ENCODE measurements at regions of chr1 and their contacts with region 1.

Region 1: DNA sequence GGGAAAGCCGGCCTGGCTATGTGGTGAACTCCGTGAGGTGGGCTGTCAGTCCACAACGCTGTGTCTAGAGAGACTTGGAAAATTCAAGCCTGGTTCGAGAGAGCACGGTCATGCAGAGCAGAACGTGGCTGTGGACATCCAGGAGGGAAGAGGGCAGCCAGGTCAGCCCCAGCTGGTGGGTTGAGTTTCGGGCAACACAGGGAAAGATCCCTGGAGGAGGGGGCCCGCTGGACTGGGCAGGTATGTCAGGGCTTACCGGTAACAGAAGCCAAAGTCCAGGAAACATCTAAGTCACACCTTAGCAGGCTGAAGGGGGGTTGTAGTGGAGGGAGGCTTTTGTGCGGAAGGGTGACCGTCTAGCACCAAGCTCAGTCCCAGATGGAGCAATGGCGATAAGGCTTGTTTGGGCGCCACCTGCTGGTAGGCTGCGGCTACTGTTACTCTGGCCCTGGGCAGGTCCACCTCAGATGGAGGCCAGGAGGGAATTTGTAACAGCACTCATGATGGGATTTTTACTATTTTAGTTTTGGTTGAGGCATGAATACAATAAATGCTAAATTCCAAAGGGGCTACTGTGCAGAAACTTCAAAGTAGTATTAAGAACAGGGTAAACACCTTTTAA is 143.3 kb upstream of the ZNF644 start:
- DNase-seq: peak; percentile 83
- H3K4me3 ChIP-seq: no peak overlapping the region
- H3K27ac ChIP-seq: no peak overlapping the region
- H3K4me1 ChIP-seq: peaks cover 4% of the 10 kb centered on the region
- H3K27me3 ChIP-seq: no peaks in the 10 kb centered on the region
- CTCF ChIP-seq: peak; percentile 98

Region 2: DNA sequence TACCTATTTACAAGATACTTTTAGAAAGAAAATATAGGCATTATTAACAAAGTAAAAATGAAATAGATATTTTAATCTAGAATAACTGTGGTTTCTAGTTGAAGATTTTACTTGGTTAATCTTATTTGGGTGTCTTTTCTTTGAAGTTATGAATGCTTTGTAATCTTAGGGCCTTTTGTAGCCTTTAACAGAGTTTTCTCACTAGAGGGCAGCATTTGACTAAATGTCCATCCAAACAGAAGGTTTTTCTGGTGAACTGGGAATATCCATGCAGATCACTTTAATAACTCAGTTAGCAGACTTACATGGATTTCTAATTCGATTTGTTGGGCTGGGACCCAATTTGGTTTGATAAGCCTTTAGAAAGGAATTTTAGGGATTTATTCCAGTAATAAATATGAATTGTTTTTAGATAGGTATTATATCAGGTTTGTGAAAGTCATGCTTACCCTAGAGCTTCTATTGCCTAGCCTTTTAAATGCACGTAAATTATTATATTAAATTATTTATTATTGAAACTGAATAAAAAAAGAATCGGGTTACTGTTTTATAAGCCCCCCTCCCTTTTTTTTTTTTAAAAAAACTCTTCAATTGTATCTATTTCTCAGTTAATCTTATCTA is 1050.5 kb before region 1 on chr1:
- CTCF ChIA-PET with region 1: interaction called, 3 read pairs
- POLR2A ChIA-PET with region 1: no interaction called
- intact Hi-C with region 1: loop called (anchors 2 kb)
- DNase-seq: peak; percentile 90
- H3K4me3 ChIP-seq: no peak overlapping the region
- H3K27ac ChIP-seq: no peak overlapping the region
- H3K4me1 ChIP-seq: peaks cover 26% of the 10 kb centered on the region
- H3K27me3 ChIP-seq: no peaks in the 10 kb centered on the region
- CTCF ChIP-seq: peak; percentile 86

Region 3: GRCh38 chr1:90616395-90616794 is 548.7 kb before region 1 on chr1:
- CTCF ChIA-PET with region 1: interaction called, 3 read pairs
- POLR2A ChIA-PET with region 1: no interaction called
- intact Hi-C with region 1: loop called (anchors 2 kb)
- DNase-seq: peak; percentile 73
- H3K4me3 ChIP-seq: no peak overlapping the region
- H3K27ac ChIP-seq: no peak overlapping the region
- H3K4me1 ChIP-seq: peaks cover 32% of the 10 kb centered on the region
- H3K27me3 ChIP-seq: no peaks in the 10 kb centered on the region
- CTCF ChIP-seq: peak; percentile 70

Region 4: GRCh38 chr1:90721210-90722194 is 443.6 kb before region 1 on chr1:
- CTCF ChIA-PET with region 1: interaction called, 16 read pairs
- POLR2A ChIA-PET with region 1: no interaction called
- intact Hi-C with region 1: loop called (anchors 2 kb)
- DNase-seq: peak; percentile 96
- H3K4me3 ChIP-seq: peak overlapping the region; percentile 75
- H3K27ac ChIP-seq: peak overlapping the region; percentile 88
- H3K4me1 ChIP-seq: peaks cover 24% of the 10 kb centered on the region
- H3K27me3 ChIP-seq: no peaks in the 10 kb centered on the region
- CTCF ChIP-seq: peak; percentile 96

Region 5: DNA sequence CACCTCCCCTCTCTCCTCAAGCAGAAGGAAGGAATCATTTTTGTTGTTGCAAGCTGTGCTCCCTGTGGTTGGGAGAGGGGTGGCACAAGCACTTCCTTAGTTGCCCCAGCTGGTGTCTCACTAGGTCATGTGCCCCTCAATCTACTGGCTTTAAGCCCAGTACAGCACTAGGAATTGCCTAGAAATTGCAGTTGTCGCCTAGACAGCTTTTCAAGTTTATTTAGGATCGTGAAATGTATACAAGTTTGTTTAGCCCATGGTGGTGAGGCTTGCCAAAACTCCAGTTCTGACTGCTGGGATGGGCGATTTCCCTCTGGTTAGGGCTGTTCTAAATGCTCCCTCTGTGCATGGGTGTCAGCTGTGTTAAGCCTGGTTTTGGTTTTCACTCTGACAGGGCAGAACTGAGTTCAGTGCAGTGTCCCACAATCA is 16.5 kb before region 1 on chr1:
- CTCF ChIA-PET with region 1: no interaction called
- POLR2A ChIA-PET with region 1: no interaction called
- intact Hi-C with region 1: no loop called
- DNase-seq: peak; percentile 30
- H3K4me3 ChIP-seq: no peak overlapping the region
- H3K27ac ChIP-seq: no peak overlapping the region
- H3K4me1 ChIP-seq: peaks cover 4% of the 10 kb centered on the region
- H3K27me3 ChIP-seq: no peaks in the 10 kb centered on the region
- CTCF ChIP-seq: 0 out of 2 replicates have a peak, but pooled peaks have one; percentile 10

Region 6: DNA sequence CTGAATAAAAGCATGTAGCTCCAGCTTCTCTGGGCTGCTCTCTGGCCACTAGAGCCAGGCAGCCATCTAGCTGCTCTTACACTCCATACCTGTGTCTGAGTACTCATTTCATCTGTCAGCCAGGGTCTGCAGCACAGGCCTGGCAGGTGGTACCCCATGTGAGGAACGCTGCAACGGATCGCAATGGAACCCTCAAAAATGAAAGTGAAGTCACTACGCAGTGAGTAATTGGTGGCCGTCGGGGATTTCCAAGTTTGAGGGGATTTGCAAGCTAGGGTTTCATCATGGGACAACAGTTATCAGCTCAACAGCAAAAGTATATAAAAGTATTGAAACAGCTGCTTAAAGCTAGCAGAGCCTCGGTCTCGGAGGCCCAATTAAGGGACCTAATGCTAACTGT is 52.8 kb after region 1 on chr1:
- CTCF ChIA-PET with region 1: no interaction called
- POLR2A ChIA-PET with region 1: no interaction called
- intact Hi-C with region 1: no loop called
- DNase-seq: no peak
- H3K4me3 ChIP-seq: no peak overlapping the region
- H3K27ac ChIP-seq: no peak overlapping the region
- H3K4me1 ChIP-seq: no peaks in the 10 kb centered on the region
- H3K27me3 ChIP-seq: no peaks in the 10 kb centered on the region
- CTCF ChIP-seq: no peak

Region 7: DNA sequence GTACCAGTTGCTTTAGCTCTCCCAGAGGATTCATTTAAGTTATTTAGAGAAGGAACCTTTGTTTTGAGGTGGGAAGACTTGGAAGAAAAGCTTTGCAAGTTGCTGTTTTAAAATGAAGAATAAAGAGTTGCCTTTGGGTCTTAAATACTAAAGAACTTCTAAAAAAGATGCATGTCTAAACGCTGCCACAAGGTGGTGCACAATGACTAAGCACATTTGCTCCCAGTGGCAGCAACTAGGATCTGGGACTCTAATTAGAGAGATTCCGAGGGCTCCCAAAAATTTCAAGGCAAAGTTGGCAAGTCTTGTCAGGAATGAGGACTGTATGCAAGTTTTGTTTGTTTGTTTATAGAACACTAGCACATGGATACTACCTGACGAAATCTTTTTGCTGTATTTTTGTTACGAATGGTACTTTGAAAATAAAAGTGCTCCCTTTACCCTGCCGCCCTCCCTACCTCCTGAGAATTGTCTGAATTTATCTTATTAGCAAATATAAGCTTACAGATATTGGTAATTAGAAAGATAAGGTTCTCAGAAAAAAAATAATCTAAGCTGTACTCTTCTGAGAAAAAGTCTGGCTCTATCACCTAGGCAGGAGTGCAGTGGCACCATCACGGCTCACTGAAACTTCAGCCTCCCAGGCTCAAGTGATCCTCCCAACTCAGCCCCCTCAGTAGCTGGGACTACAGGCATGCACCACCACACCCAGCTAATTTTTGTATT is 117.7 kb after region 1 on chr1:
- CTCF ChIA-PET with region 1: interaction called, 43 read pairs
- POLR2A ChIA-PET with region 1: no interaction called
- intact Hi-C with region 1: loop called (anchors 1 kb)
- DNase-seq: peak; percentile 83
- H3K4me3 ChIP-seq: no peak overlapping the region
- H3K27ac ChIP-seq: no peak overlapping the region
- H3K4me1 ChIP-seq: no peaks in the 10 kb centered on the region
- H3K27me3 ChIP-seq: no peaks in the 10 kb centered on the region
- CTCF ChIP-seq: peak; percentile 84

Region 8: DNA sequence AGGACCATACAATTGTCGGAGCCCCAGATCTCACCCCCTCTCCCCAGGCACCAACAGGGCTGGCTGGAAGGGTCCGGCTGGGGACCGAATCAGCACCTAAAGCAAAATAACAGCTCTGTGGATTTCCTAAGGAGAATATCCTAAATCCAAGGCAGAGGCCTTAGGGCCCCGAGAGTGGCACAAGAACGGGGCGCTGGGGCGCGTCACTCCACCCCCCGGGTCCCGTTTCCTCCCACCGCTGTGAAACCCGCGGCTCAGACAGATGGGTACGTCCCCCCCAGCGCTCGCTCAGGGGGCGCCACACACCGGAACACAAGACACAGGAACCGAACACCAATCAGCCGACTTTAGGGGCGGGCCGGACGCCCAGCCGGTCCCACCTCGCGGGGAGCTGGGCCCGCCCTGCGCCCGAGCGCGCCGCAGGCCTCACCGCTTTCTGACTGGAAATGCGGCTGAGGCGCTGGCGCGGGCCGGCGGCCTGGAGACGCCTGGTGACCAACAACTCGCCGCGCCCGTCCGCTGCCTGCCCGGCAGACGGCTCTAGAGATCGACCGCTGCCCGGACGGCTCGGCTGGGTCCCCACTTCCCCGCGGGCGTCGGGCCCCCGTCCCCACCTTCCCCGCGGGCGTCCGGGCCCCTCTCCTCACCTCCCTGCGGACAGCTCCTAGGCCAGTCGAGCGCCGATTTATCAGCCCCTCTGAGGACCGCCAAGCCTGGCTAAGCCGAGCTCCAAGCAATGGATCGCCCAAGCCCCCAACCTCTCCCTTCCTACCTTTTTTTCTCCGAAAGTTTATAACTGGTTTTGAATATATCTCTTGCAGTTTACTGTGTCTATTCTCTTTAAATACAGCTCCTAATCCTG is 239.2 kb after region 1 on chr1 and contains the start of gene HFM1:
- CTCF ChIA-PET with region 1: interaction called, 6 read pairs
- POLR2A ChIA-PET with region 1: no interaction called
- intact Hi-C with region 1: loop called (anchors 2 kb)
- DNase-seq: peak; percentile 88
- H3K4me3 ChIP-seq: peak within 1 kb of the TSS; percentile 60
- H3K27ac ChIP-seq: peak within 1 kb of the TSS; percentile 68
- H3K4me1 ChIP-seq: peaks cover 10% of the 10 kb centered on the region
- H3K27me3 ChIP-seq: no peaks in the 10 kb centered on the region
- CTCF ChIP-seq: no peak
- total RNA-seq, gene HFM1: 0.69 and 1.3 TPM in 2 replicates

Region 9: DNA sequence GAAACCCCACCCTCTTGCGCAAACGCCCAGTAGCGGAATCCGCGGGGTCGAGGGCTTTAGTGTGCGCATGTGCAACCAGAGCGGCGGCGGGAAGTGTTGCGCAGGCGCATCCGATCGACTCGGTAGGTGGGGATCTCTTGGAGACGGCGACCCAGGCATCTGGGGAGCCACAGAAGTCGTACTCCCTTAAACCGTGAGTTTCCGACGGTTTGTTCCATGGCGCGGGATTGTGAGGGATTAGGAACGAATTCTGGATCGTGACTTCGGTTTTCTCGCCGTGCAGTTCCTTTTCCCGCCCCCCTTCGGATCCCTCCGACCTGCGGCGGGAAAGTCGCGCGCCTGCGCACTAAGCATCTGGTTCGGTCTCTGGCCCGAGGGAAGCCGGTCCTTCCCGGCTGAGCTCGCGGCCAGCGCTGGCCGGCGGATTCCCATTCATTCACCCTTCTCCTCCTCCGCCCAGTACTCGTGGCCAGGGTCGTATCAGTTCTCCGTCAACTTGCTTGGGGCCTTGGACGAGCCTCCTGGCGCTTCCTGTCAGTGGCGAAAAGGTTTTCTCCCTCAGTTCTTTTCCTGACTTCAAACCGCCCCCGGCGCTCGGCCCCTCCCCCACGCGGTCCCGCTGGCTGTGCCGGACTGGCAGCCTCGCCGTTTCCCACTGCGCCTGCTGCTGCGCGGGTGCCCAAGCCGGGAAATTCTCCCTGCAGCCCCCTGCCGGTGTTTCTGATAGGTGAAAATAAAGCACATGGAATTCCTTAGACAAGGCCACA is 335.8 kb after region 1 on chr1 and contains the start of gene CDC7:
- CTCF ChIA-PET with region 1: interaction called, 3 read pairs
- POLR2A ChIA-PET with region 1: no interaction called
- intact Hi-C with region 1: loop called (anchors 5 kb)
- DNase-seq: peak; percentile 96
- H3K4me3 ChIP-seq: peak within 1 kb of the TSS; percentile 56
- H3K27ac ChIP-seq: peak within 1 kb of the TSS; percentile 95
- H3K4me1 ChIP-seq: peaks cover 17% of the 10 kb centered on the region
- H3K27me3 ChIP-seq: no peaks in the 10 kb centered on the region
- CTCF ChIP-seq: peak; percentile 70
- total RNA-seq, gene CDC7: 29.6 and 34.0 TPM in 2 replicates

Region 10: GRCh38 chr1:91944087-91944486 is 778.9 kb after region 1 on chr1:
- CTCF ChIA-PET with region 1: no interaction called
- POLR2A ChIA-PET with region 1: no interaction called
- intact Hi-C with region 1: no loop called
- DNase-seq: no peak
- H3K4me3 ChIP-seq: no peak overlapping the region
- H3K27ac ChIP-seq: no peak overlapping the region
- H3K4me1 ChIP-seq: no peaks in the 10 kb centered on the region
- H3K27me3 ChIP-seq: no peaks in the 10 kb centered on the region
- CTCF ChIP-seq: no peak